ENCODE measurements at regions of chr9 and their contacts with region 1.

Region 1: DNA sequence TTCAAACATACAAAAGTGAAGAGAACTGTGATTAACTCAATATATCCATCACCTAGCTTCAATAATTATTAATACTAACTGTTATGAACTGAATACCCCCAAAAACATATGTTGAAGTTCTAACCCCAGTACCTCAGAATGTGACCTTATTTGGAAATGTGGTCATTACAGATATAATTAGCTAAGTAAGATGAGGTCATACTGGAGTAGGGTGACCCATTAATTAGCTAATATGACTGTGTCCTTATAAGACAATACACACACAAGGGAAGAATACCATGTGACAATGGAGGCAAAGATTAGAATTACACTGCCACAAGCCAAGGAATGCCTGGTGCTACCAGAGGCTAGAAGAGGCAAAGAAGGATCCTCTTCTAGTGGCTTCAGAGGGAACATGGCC is 7.8 kb downstream of the RRAGA start:
- DNase-seq: no peak
- H3K4me3 ChIP-seq: no peak overlapping the region
- H3K4me3 Mint-ChIP-seq: no peak overlapping the region
- H3K27ac ChIP-seq: no peak overlapping the region
- H3K27ac Mint-ChIP-seq: no peak overlapping the region
- H3K4me1 ChIP-seq: peaks cover 7% of the 10 kb centered on the region
- H3K4me1 Mint-ChIP-seq: peaks cover 2 to 18% (median 10%) of the 10 kb centered on the region in 4 donors
- H3K27me3 ChIP-seq: no peaks in the 10 kb centered on the region
- H3K27me3 Mint-ChIP-seq: no peaks in the 10 kb centered on the region

Region 2: DNA sequence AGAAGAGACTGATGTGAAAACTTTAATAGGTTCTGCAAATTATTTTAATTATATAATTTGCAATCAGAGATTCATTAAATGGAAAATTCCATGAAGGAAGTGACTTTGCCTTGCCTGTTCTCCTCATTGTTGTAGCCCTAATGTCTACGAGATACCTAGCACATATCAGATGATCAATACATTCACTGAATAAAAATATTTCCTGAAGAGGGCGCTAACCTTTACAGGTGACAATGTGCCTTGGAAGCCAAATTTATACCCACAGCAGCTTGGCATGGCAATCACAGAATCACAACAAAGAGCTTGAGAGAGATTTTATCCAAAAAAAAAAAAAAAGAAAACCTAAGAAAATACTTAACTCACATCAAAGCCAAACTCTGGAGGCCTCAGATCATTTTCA is 28.3 kb after region 1 on chr9:
- CTCF ChIA-PET with region 1: interaction called, 16 read pairs
- POLR2A ChIA-PET with region 1: no interaction called
- intact Hi-C with region 1: no loop called
- DNase-seq: peak in 4 of 5 donors; percentile 49 to 65 (median 54)
- H3K4me3 ChIP-seq: no peak overlapping the region
- H3K4me3 Mint-ChIP-seq: no peak overlapping the region
- H3K27ac ChIP-seq: no peak overlapping the region
- H3K27ac Mint-ChIP-seq: peak overlapping the region in 2 of 7 donors; percentile 19 to 58
- H3K4me1 ChIP-seq: no peaks in the 10 kb centered on the region
- H3K4me1 Mint-ChIP-seq: peaks cover 0 to 4% (median 3%) of the 10 kb centered on the region in 4 donors
- H3K27me3 ChIP-seq: no peaks in the 10 kb centered on the region
- H3K27me3 Mint-ChIP-seq: no peaks in the 10 kb centered on the region

Measured in CD4-positive, alpha-beta memory T cell (primary cell).